ENCODE measurements at regions of chr17 and their contacts with region 1.

Region 1: GRCh38 chr17:27353461-27354050 is 59.6 kb downstream of the WSB1 start:
- DNase-seq: peak; percentile 92
- ATAC-seq: peak; percentile 96
- H3K4me3 ChIP-seq: peak overlapping the region; percentile 51
- H3K27ac ChIP-seq: peak overlapping the region; percentile 90
- H3K4me1 ChIP-seq: peaks cover 10% of the 10 kb centered on the region
- H3K27me3 ChIP-seq: no peaks in the 10 kb centered on the region
- CTCF ChIP-seq: peak; percentile 99
- POLR2A ChIP-seq: peak; percentile 79; the same call in 1 of the 2 replicates
- RAD21 ChIP-seq: peak; percentile 98

Region 2: DNA sequence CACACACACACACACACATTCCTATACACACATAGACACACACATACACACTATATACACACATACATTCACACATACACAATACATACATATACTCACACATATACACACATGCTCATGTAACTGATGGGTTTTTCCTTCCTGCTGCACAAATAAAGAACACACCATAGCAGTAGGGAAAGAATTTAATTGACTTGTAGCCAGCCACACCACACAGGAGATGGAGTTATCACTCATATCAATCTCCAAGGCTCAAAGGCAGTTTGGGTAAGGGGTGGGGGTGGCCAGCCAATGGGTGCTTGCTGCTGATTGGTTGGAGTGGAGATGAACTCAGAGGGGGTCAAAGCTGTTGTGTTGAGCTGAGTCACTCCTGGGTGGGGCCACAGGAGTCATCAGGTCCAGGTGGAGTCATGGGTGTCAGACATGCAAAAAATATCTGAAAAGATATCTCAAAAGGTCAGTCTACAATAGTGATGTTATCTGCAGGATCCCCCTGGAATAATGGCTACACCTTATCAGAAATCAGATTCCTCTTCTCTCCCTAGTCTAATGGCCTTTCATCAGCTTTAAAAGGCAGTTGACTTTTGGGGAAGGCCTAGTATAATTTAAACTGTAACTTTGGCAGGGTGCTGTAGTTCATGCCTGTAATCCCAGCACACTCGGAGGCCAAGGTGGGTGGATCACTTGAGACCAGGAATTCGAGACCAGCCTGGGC is 13.6 kb before region 1 on chr17:
- CTCF ChIA-PET with region 1: no interaction called
- POLR2A ChIA-PET with region 1: no interaction called
- dilution Hi-C with region 1: no loop called
- in situ Hi-C with region 1: no loop called
- intact Hi-C with region 1: no loop called
- DNase-seq: no peak
- ATAC-seq: no peak
- H3K4me3 ChIP-seq: no peak overlapping the region
- H3K27ac ChIP-seq: no peak overlapping the region
- H3K4me1 ChIP-seq: no peaks in the 10 kb centered on the region
- H3K27me3 ChIP-seq: no peaks in the 10 kb centered on the region
- CTCF ChIP-seq: no peak
- POLR2A ChIP-seq: no peak
- RAD21 ChIP-seq: no peak

Region 3: DNA sequence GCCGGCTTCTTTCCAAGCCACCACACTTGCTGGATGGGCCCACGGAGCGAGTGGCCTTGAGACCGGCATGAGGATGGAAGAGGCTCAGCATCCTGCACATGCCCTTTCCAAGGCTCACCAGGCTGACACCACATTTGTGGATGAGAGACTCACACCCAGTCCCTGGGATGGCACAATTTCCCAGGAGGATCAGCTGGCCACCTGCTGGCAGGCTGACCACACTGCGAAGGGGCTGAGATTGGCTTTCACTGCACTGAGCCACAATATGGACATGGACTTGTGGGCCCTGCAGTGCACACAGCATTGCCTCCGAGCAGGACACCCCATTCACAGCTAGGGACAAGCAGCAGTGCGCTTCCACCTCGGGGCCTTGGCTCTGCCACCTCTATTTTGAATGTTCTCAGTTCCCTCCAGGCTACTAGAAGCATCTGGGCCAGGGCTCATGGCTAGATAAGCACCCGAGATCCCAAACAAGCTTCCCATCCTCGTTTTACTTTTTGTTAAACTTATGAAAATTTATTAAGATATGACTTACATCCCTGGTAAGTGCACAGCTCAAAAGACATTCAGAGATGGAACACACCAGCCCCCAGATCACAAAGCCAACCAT is 77.4 kb after region 1 on chr17:
- CTCF ChIA-PET with region 1: interaction called, 5 read pairs
- POLR2A ChIA-PET with region 1: no interaction called
- dilution Hi-C with region 1: no loop called
- in situ Hi-C with region 1: no loop called
- intact Hi-C with region 1: loop called (anchors 5 kb)
- DNase-seq: peak; percentile 51
- ATAC-seq: peak; percentile 80
- H3K4me3 ChIP-seq: no peak overlapping the region
- H3K27ac ChIP-seq: no peak overlapping the region
- H3K4me1 ChIP-seq: peaks cover 6% of the 10 kb centered on the region
- H3K27me3 ChIP-seq: no peaks in the 10 kb centered on the region
- CTCF ChIP-seq: peak; percentile 70
- POLR2A ChIP-seq: no peak
- RAD21 ChIP-seq: peak; percentile 76

Region 4: GRCh38 chr17:27446569-27447301 is 93.2 kb after region 1 on chr17:
- CTCF ChIA-PET with region 1: no interaction called
- POLR2A ChIA-PET with region 1: no interaction called
- dilution Hi-C with region 1: no loop called
- in situ Hi-C with region 1: no loop called
- intact Hi-C with region 1: loop called (anchors 2 kb)
- DNase-seq: peak; percentile 100
- ATAC-seq: peak; percentile 88
- H3K4me3 ChIP-seq: no peak overlapping the region
- H3K27ac ChIP-seq: peak overlapping the region; percentile 85; the same call in 1 of the 2 replicates
- H3K4me1 ChIP-seq: peaks cover 25% of the 10 kb centered on the region
- H3K27me3 ChIP-seq: no peaks in the 10 kb centered on the region
- CTCF ChIP-seq: no peak
- POLR2A ChIP-seq: no peak
- RAD21 ChIP-seq: no peak

Region 5: GRCh38 chr17:27544350-27545131 is 191.0 kb after region 1 on chr17:
- CTCF ChIA-PET with region 1: no interaction called
- POLR2A ChIA-PET with region 1: no interaction called
- dilution Hi-C with region 1: no loop called
- in situ Hi-C with region 1: no loop called
- intact Hi-C with region 1: loop called (anchors 5 kb)
- DNase-seq: peak; percentile 63
- ATAC-seq: no peak
- H3K4me3 ChIP-seq: no peak overlapping the region
- H3K27ac ChIP-seq: no peak overlapping the region
- H3K4me1 ChIP-seq: peaks cover 46% of the 10 kb centered on the region
- H3K27me3 ChIP-seq: no peaks in the 10 kb centered on the region
- CTCF ChIP-seq: no peak
- POLR2A ChIP-seq: no peak
- RAD21 ChIP-seq: no peak

Region 6: DNA sequence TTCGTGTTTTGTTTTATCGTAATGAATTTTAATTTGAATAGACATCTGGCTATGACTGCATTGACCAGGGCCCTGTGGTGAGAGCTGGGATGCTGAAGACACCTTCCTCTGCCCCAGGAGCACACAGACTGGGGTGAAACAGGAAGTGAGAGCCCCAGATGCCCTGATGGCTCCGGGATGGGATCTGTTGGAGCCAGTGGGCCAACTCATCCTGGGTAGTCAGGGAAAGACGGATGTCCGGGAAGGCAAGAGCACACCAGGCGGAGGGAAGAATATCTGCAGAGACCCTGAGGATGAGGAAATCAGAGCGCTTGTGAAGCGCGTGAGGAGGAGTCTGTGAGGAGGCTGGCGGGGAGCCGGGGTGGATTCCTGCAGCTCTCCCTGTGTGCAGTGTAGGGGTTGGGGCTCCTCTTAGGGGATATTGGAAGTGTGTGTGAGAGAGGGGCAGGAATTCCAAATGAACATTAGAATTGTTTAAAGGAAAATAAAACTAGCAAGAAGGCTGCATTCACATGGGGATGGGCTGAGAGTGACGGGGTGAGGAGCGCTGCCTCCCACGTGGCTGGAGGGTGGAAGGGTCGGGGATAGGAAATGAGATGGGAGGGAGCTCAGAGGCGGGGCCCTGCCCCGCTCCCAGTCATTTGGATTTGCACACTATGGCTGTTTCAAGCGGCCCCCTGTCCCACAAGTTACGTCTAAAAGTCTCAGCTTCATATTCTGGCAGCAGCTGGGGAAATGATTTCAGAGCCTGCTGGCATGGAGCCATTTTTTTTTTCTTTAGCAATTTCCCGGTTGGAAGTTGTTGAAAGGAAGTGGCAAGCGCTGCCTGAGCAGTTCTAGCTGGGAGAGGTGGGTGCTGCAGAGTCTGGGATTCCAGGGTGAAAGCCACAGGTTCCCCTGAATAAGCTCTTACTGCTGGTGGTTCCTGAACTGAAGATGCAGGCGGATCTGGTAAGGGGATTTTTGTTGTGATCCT is 206.2 kb after region 1 on chr17:
- CTCF ChIA-PET with region 1: no interaction called
- POLR2A ChIA-PET with region 1: no interaction called
- dilution Hi-C with region 1: no loop called
- in situ Hi-C with region 1: no loop called
- intact Hi-C with region 1: loop called (anchors 1 kb)
- DNase-seq: peak; percentile 93
- ATAC-seq: peak; percentile 79
- H3K4me3 ChIP-seq: no peak overlapping the region
- H3K27ac ChIP-seq: peak overlapping the region; percentile 86
- H3K4me1 ChIP-seq: peaks cover 20% of the 10 kb centered on the region
- H3K27me3 ChIP-seq: no peaks in the 10 kb centered on the region
- CTCF ChIP-seq: peak; percentile 50
- POLR2A ChIP-seq: peak; percentile 47; the same call in 1 of the 2 replicates
- RAD21 ChIP-seq: peak; percentile 63

Region 7: GRCh38 chr17:27601069-27601975 is 247.8 kb after region 1 on chr17:
- CTCF ChIA-PET with region 1: interaction called, 9 read pairs
- POLR2A ChIA-PET with region 1: no interaction called
- dilution Hi-C with region 1: no loop called
- in situ Hi-C with region 1: loop called (anchors 5 kb)
- intact Hi-C with region 1: loop called (anchors 1 kb)
- DNase-seq: peak; percentile 83
- ATAC-seq: peak; percentile 65
- H3K4me3 ChIP-seq: no peak overlapping the region
- H3K27ac ChIP-seq: no peak overlapping the region
- H3K4me1 ChIP-seq: peaks cover 2% of the 10 kb centered on the region; the same call in 1 of the 2 replicates
- H3K27me3 ChIP-seq: no peaks in the 10 kb centered on the region
- CTCF ChIP-seq: peak; percentile 97
- POLR2A ChIP-seq: peak; percentile 37; the same call in 1 of the 2 replicates
- RAD21 ChIP-seq: peak; percentile 97

Region 8: GRCh38 chr17:27654654-27655524 is 301.3 kb after region 1 on chr17:
- CTCF ChIA-PET with region 1: no interaction called
- POLR2A ChIA-PET with region 1: no interaction called
- dilution Hi-C with region 1: no loop called
- in situ Hi-C with region 1: no loop called
- intact Hi-C with region 1: loop called (anchors 2 kb)
- DNase-seq: peak; percentile 45
- ATAC-seq: peak; percentile 75
- H3K4me3 ChIP-seq: no peak overlapping the region
- H3K27ac ChIP-seq: no peak overlapping the region
- H3K4me1 ChIP-seq: no peaks in the 10 kb centered on the region
- H3K27me3 ChIP-seq: peaks cover 2% of the 10 kb centered on the region; the same call in 1 of the 2 replicates
- CTCF ChIP-seq: peak; percentile 73
- POLR2A ChIP-seq: no peak
- RAD21 ChIP-seq: peak; percentile 52

Region 9: GRCh38 chr17:27846042-27846655 is 492.6 kb after region 1 on chr17:
- CTCF ChIA-PET with region 1: no interaction called
- POLR2A ChIA-PET with region 1: no interaction called
- dilution Hi-C with region 1: no loop called
- in situ Hi-C with region 1: no loop called
- intact Hi-C with region 1: no loop called
- DNase-seq: no peak
- ATAC-seq: no peak
- H3K4me3 ChIP-seq: no peak overlapping the region
- H3K27ac ChIP-seq: no peak overlapping the region
- H3K4me1 ChIP-seq: no peaks in the 10 kb centered on the region
- H3K27me3 ChIP-seq: peaks cover 1% of the 10 kb centered on the region; the same call in 1 of the 2 replicates
- CTCF ChIP-seq: no peak
- POLR2A ChIP-seq: no peak
- RAD21 ChIP-seq: no peak

Measured in IMR-90 (cell line).